GM23248 (cell line): ENCODE measurements at regions of chr2 and their contacts with region 1.

Region 1: GRCh38 chr2:234500394-234501006 is 3.6 kb upstream of the ARL4C start:
- DNase-seq: peak; percentile 77
- H3K4me3 ChIP-seq: no peak overlapping the region
- H3K27ac ChIP-seq: no peak overlapping the region
- H3K4me1 ChIP-seq: peaks cover 12% of the 10 kb centered on the region
- H3K27me3 ChIP-seq: no peaks in the 10 kb centered on the region

Region 2: GRCh38 chr2:233976690-233977294 is 523.7 kb before region 1 on chr2:
- in situ Hi-C with region 1: loop called (anchors 10 kb)
- DNase-seq: peak; percentile 75
- H3K4me3 ChIP-seq: no peak overlapping the region
- H3K27ac ChIP-seq: no peak overlapping the region
- H3K4me1 ChIP-seq: peaks cover 34% of the 10 kb centered on the region
- H3K27me3 ChIP-seq: no peaks in the 10 kb centered on the region

Region 3: GRCh38 chr2:234288974-234289455 is 211.5 kb before region 1 on chr2:
- in situ Hi-C with region 1: loop called (anchors 25 kb)
- DNase-seq: peak; percentile 59
- H3K4me3 ChIP-seq: no peak overlapping the region
- H3K27ac ChIP-seq: no peak overlapping the region
- H3K4me1 ChIP-seq: peaks cover 20% of the 10 kb centered on the region; the same call in 1 of the 2 replicates
- H3K27me3 ChIP-seq: no peaks in the 10 kb centered on the region